WTC11 (cell line): ENCODE measurements at regions of chr10 and their contacts with region 1.

Region 1: DNA sequence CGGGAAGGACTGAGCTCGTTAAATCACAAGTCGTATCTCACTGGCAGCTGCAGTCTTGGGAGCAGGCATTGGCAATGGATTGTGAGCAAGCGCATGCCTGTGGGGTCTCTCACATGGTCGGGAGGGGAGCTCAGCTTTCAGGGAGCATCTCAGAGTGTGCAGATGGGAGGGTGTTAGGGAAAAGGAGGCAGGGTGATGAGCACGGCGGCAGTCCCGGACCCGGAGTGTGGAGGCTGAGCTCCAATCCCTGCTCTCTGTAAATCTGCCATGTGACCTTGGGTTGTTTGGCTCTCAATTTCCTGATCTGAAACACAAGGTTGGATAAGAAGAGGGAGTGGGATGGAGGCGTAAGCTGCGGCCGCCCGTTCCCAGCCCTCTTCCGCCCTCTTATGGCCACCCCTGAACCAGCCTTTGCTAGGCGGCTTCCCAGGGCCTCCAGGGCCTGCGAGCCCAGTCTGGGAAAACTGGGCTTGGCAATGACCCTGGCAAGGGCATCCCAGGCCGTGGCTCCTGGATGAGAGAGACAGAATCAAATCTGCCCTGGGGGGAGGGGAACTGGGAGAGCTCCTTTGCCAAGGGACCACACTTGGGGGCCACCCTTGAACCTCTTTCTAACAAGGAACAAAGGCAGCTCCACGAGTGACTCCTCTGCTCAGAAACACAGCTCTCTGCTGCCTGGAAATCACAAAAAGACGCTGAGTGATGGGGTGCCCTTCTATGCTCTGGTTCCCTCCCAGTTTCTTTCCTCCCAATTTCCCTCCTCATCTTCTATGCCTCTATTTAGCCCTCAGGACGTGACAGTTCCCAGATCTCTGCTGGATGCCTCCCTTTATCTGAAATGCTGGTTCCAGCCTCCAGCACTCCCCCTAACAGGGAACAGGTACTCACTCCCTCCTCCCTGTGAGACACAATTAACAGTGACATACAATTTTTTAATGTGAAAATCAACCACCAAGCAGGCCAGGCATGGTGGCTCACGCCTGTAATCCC is 41.7 kb upstream of the LOXL4 start:
- DNase-seq: peak; percentile 81
- ATAC-seq: peak; percentile 92
- H3K4me3 Mint-ChIP-seq: peak overlapping the region; percentile 58
- H3K27ac Mint-ChIP-seq: peak overlapping the region; percentile 52; the same call in 1 of the 2 replicates
- H3K4me1 Mint-ChIP-seq: peaks cover 17% of the 10 kb centered on the region
- H3K27me3 Mint-ChIP-seq: no peaks in the 10 kb centered on the region
- CTCF ChIP-seq: peak; percentile 43

Region 2: DNA sequence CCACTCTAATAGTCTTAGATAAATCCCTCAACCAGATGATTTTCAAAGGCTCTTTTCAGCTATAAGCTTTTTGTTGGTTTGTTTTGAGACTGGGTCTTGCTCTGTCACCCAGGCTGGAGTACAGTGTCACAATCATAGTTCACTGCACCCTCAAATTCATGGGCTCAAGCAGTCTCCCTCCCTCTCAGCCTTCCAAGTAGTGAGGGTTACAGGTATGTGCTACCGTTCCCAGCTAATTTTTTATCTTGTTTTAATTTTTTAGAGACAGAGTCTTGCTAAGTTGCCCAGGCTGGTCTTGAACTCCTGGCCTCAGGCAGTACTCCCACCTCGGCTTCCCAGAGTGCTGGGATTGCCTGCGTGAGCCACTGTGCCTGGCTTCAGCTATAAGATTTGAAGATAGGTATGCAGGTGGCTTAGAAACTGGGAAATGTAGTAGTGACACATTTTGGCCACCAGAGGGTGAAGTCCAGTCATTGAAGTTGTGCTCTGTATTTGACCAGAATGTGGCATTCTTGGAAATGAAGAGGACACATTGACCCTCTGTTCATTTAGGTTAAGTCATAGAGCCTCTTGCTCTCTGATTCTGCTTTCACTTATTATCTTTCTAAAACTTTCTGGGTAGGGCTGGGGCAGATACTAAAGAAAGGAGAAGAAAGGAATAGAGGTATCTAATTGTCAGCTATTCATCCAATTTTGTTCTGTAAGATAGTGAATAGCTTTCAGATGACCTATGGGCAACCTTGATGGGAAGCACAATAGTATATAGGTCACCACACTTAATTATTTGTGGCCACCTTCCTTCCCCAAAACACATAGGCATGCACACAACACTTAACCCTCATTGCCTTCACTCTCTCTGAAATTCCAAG is 139.2 kb before region 1 on chr10:
- CTCF ChIA-PET with region 1: interaction called, 63 read pairs
- POLR2A ChIA-PET with region 1: no interaction called
- DNase-seq: peak; percentile 71
- ATAC-seq: peak; percentile 81
- H3K4me3 Mint-ChIP-seq: no peak overlapping the region
- H3K27ac Mint-ChIP-seq: no peak overlapping the region; the same call in 1 of the 2 replicates
- H3K4me1 Mint-ChIP-seq: peaks cover 75% of the 10 kb centered on the region
- H3K27me3 Mint-ChIP-seq: no peaks in the 10 kb centered on the region
- CTCF ChIP-seq: peak; percentile 57

Region 3: GRCh38 chr10:98262571-98262970 is 47.1 kb before region 1 on chr10:
- CTCF ChIA-PET with region 1: interaction called, 204 read pairs
- POLR2A ChIA-PET with region 1: interaction called, 3 read pairs
- DNase-seq: peak; percentile 66
- ATAC-seq: peak; percentile 87
- H3K4me3 Mint-ChIP-seq: no peak overlapping the region
- H3K27ac Mint-ChIP-seq: no peak overlapping the region
- H3K4me1 Mint-ChIP-seq: peaks cover 5% of the 10 kb centered on the region
- H3K27me3 Mint-ChIP-seq: peaks cover 5% of the 10 kb centered on the region
- CTCF ChIP-seq: peak; percentile 25; the same call in 1 of the 2 replicates

Region 4: DNA sequence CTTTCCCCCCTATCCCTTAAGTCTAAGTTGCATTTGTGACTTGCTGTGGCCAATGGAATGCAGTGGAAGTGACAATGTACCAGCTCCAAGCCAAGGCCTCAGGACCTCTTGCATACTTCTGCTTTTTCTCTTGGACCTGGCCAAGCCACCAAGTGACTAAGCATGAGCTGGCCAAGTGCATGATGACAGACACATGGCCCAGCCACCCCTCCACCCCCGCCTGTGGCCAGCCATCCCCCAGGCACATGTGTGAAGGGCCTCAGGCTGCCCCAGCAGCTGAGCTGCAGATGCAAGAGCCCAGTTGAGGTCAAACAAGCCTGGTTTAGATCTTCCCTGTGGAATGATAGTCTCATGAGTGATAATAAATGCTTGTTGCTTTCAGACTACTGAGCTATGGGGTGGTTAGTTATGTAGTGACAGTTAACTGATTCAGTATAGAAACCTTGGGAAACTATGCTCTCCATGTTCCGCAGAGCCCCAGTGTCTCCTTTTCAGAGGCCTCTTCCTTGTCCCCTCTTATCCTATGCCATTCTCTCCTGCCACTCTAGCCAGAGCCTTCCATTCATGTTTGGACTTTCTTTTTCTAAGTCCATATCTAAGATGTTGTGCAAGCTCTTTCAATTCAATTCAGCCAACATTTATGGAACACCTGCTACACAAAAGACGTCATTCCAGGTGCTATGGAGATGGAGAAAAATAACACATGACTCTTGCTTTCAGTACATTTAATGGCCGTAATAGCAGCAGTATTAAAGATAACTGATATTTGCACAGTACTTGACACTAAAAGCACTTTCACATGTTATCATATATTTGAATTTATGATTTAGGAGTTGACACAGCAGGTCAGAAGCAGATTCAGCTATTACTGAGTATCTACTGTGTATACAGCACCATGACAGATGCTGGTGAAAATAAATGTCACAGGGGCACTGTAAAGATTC is 13.8 kb after region 1 on chr10:
- CTCF ChIA-PET with region 1: interaction called, 17 read pairs
- POLR2A ChIA-PET with region 1: no interaction called
- DNase-seq: no peak
- ATAC-seq: no peak
- H3K4me3 Mint-ChIP-seq: no peak overlapping the region
- H3K27ac Mint-ChIP-seq: no peak overlapping the region
- H3K4me1 Mint-ChIP-seq: peaks cover 7% of the 10 kb centered on the region
- H3K27me3 Mint-ChIP-seq: no peaks in the 10 kb centered on the region
- CTCF ChIP-seq: no peak

Region 5: DNA sequence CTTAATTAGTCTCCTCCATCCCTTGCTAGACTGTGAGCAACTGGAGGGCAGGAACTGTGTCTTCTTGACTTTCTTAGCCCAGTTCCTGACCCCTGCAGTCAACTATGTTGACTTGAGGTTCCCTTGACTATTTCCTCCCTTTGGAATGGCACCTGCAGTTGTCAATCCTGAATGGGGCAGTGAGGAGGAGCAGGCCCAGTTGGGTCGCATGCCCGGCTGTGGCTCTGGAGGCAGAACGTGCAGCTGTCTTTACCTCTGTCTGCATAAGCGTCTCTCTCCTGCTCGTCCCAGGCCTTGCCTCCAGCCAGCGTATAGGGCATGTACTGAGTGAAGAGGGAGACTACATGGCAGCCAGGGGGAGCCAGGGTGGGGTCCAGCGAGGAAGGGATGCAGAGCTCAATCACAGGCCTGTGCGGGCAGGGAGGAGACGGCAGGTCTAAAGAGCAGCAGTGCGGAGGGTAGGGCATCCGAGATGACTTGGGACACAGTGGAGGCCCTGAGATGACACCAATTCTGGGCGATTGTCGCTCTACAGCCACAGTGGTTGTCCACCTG is 78.5 kb after region 1 on chr10:
- CTCF ChIA-PET with region 1: interaction called, 11 read pairs
- POLR2A ChIA-PET with region 1: no interaction called
- DNase-seq: peak; percentile 30
- ATAC-seq: peak; percentile 91
- H3K4me3 Mint-ChIP-seq: no peak overlapping the region
- H3K27ac Mint-ChIP-seq: peak overlapping the region; percentile 86
- H3K4me1 Mint-ChIP-seq: peaks cover 3% of the 10 kb centered on the region; the same call in 1 of the 2 replicates
- H3K27me3 Mint-ChIP-seq: no peaks in the 10 kb centered on the region
- CTCF ChIP-seq: no peak

Region 6: DNA sequence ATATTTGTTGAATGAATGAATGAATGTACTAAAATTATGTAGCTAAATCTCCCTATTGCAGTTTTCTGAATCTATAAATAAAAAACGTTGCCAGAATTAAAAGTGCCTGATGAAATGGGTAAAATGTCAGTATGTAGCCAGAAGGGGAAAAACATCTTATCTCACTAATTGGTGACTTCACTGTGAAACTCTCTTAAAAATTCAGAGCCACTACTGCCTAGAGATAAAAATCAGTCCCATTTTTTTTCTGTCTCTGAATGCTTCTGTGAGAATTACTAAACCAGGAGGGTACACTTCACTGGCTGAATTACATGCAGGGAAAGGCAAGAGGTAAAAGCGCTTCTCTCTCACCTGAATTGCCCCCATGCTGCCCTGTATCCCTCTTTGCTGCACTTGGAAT is 206.7 kb after region 1 on chr10:
- CTCF ChIA-PET with region 1: no interaction called
- POLR2A ChIA-PET with region 1: no interaction called
- DNase-seq: no peak
- ATAC-seq: no peak
- H3K4me3 Mint-ChIP-seq: no peak overlapping the region
- H3K27ac Mint-ChIP-seq: no peak overlapping the region
- H3K4me1 Mint-ChIP-seq: 0 out of 2 replicates have a peak, but pooled peaks cover 4% of the 10 kb centered on the region
- H3K27me3 Mint-ChIP-seq: no peaks in the 10 kb centered on the region
- CTCF ChIP-seq: no peak